GM10248 (cell line): ENCODE measurements at regions of chr3 and their contacts with region 1.

Region 1: GRCh38 chr3:69986419-69986818 is 13.1 kb upstream of the SAMMSON start:
- DNase-seq: no peak
- CTCF ChIP-seq: no peak

Region 2: DNA sequence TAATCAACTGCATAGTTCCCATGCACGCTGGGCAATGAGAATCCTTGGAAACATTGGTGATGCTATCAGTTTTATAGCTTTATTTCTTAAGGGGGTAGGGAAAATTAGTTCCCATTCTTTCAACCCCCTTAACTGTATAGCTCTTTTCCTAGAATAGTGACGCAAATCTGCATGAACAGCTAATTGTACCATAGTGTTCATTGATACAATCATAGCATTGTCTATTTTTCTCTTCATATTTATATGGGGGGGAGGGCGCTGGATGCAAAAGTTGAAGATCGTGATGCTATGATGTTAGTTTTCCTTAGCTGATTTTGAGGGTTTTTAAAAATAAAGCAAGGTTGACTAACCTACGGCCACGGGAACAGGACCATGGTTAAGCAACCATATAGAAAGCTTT is 19.3 kb before region 1 on chr3:
- CTCF ChIA-PET with region 1: no interaction called
- POLR2A ChIA-PET with region 1: no interaction called
- DNase-seq: no peak
- CTCF ChIP-seq: no peak

Region 3: GRCh38 chr3:69999191-70000027 is 13.0 kb after region 1 on chr3 and contains the start of gene SAMMSON:
- CTCF ChIA-PET with region 1: interaction called, 13 read pairs
- POLR2A ChIA-PET with region 1: no interaction called
- DNase-seq: no peak
- CTCF ChIP-seq: no peak

Region 4: GRCh38 chr3:70400194-70400593 is 413.8 kb after region 1 on chr3:
- CTCF ChIA-PET with region 1: no interaction called
- POLR2A ChIA-PET with region 1: no interaction called
- DNase-seq: no peak
- CTCF ChIP-seq: no peak